HepG2 (cell line): ENCODE measurements at regions of chr3 and their contacts with region 1.

Region 1: DNA sequence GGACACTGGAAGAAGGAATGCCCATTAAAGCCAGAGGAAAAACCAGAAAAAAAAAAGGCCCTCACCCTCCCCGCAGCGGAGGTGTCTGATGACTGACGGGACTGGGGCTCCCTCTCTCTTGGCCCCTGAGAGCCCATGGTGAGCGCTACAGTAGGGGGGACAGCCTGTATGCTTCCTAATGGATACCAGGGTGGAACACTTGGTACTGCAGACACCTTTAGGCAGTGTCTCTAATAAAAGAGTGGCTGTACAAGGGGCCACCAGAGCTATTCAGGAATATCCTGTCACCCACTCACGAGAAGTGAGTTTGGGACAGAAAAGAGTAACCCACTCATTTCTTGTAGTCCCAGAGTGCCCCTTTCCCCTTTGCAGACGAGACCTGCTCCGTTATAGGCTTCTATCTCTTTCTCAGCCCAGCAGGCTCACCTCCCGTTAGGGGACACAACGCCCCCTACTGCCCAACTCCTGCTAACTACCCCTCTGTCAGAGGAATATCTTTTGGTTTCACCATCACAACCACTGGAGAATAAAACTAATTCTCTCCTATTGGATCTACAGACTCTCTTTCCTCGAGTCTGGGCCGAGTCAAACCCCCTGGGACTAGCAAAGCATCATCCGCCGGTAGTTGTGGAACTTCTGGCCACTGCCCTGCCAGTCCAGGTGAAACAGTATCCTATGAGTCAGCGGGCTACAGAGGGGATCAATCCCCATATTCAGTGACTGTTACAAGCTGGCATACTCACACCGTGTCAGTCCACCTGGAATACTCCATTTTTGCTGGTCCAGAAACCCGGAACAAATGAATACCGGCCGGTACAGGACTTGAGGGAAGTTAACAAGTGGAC is 40.8 kb downstream of the ZBTB11 start:
- DNase-seq: peak; percentile 44
- ATAC-seq: peak; percentile 88
- H3K4me3 ChIP-seq: peak overlapping the region; percentile 27 to 49 (median 40)
- H3K27ac ChIP-seq: no peak overlapping the region
- H3K4me1 ChIP-seq: peaks cover 37% of the 10 kb centered on the region
- H3K27me3 ChIP-seq: peaks cover 0 to 27% of the 10 kb centered on the region in 2 experiments; a peak in 3 of 5 replicates
- CTCF ChIP-seq: peak; percentile 87
- EP300 ChIP-seq: no peak
- POLR2A ChIP-seq: no peak
- RAD21 ChIP-seq: peak; percentile 73; the same call in 1 of the 2 replicates

Region 2: GRCh38 chr3:101069901-101070798 is 566.0 kb before region 1 on chr3:
- CTCF ChIA-PET with region 1: interaction called, 3 read pairs
- POLR2A ChIA-PET with region 1: no interaction called
- in situ Hi-C with region 1: loop called (anchors 25 kb)
- intact Hi-C with region 1: loop called (anchors 1 kb)
- DNase-seq: peak; percentile 31
- ATAC-seq: peak; percentile 99
- H3K4me3 ChIP-seq: no peak overlapping the region
- H3K27ac ChIP-seq: no peak overlapping the region
- H3K4me1 ChIP-seq: no peaks in the 10 kb centered on the region
- H3K27me3 ChIP-seq: no peaks in the 10 kb centered on the region; a peak in 1 of 5 replicates
- CTCF ChIP-seq: peak; percentile 79
- EP300 ChIP-seq: no peak
- POLR2A ChIP-seq: no peak
- RAD21 ChIP-seq: peak; percentile 46; the same call in 1 of the 2 replicates

Region 3: DNA sequence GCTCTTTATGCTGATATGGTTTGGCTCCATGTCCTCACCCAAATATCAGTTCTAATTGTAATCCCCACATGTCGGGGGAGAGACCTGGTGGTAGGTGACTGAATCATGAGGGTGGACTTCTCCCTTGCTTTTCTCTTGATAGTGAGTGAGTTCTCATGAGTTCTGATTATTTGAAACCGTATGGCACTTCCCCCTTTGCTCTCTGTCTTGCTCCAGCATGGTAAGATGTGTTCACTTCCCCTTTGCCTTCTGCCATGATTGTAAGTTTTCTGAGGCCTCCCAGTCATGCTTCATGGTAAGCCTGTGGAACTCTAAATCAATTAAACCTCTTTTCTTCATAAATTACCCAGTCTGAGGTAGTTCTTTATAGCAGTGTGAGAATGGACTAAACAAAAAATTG is 423.4 kb before region 1 on chr3:
- CTCF ChIA-PET with region 1: no interaction called
- POLR2A ChIA-PET with region 1: no interaction called
- in situ Hi-C with region 1: no loop called
- intact Hi-C with region 1: loop called (anchors 5 kb)
- DNase-seq: no peak
- ATAC-seq: no peak
- H3K4me3 ChIP-seq: no peak overlapping the region
- H3K27ac ChIP-seq: no peak overlapping the region
- H3K4me1 ChIP-seq: no peaks in the 10 kb centered on the region
- H3K27me3 ChIP-seq: no peaks in the 10 kb centered on the region; a peak in 1 of 5 replicates
- CTCF ChIP-seq: no peak
- EP300 ChIP-seq: no peak
- POLR2A ChIP-seq: no peak
- RAD21 ChIP-seq: no peak

Region 4: GRCh38 chr3:101229681-101230080 is 406.5 kb before region 1 on chr3:
- CTCF ChIA-PET with region 1: no interaction called
- POLR2A ChIA-PET with region 1: no interaction called
- in situ Hi-C with region 1: loop called (anchors 25 kb)
- intact Hi-C with region 1: loop called (anchors 10 kb)
- DNase-seq: peak; percentile 8
- ATAC-seq: peak; percentile 41; the same call in 1 of the 3 replicates
- H3K4me3 ChIP-seq: no peak overlapping the region
- H3K27ac ChIP-seq: no peak overlapping the region
- H3K4me1 ChIP-seq: no peaks in the 10 kb centered on the region
- H3K27me3 ChIP-seq: no peaks in the 10 kb centered on the region
- CTCF ChIP-seq: peak; percentile 48
- EP300 ChIP-seq: no peak
- POLR2A ChIP-seq: no peak
- RAD21 ChIP-seq: no peak

Region 5: DNA sequence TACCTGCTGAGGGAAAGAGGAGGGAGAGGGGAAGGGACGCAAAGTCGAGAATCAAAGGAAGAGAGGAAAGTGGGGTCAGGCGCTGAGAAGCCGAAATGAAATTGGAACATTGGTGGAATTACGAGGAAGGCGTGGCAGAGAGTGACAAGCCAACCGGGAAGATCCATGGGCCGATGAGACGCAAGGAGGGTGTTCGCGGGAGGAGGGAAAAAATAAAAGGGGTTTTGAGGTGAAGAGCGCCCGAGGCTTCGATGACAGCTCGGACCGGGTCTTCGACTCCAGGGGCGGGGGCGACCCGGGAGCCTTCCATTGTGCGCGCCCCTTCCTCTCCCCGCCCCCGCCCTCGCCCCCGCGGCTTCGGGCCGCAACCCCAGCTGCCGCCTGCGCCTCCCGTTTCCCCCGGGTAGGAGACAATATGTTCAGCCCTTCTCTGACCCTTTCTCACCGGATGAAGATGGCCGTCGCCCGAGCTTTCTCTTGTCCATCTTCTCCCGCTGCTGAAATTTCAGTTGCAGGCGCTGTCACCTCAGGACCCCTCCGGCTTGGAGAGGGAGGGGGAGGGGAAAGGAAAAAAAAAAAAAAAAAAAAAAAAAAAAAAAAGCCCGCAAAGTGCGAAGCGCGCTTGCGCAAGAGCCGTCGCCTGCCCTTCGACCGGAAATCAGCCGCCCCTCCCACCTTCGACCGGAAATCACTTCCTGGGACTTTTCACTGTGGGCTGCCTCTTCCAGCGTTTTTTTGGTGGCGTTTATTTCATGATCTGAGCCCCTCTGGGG is 123.3 kb before region 1 on chr3 and contains the start of gene SENP7:
- CTCF ChIA-PET with region 1: no interaction called
- POLR2A ChIA-PET with region 1: no interaction called
- in situ Hi-C with region 1: no loop called
- intact Hi-C with region 1: loop called (anchors 10 kb)
- DNase-seq: peak; percentile 71
- ATAC-seq: peak; percentile 85
- H3K4me3 ChIP-seq: peak within 1 kb of the TSS; percentile 80 to 92 (median 83)
- H3K27ac ChIP-seq: peak within 1 kb of the TSS; percentile 93
- H3K4me1 ChIP-seq: peaks cover 13% of the 10 kb centered on the region
- H3K27me3 ChIP-seq: no peaks in the 10 kb centered on the region; a peak in 1 of 5 replicates
- CTCF ChIP-seq: no peak
- EP300 ChIP-seq: no peak
- POLR2A ChIP-seq: peak; percentile 48 to 66
- RAD21 ChIP-seq: no peak
- total RNA-seq, gene SENP7: 10.0 and 10.3 TPM in 2 replicates

Region 6: DNA sequence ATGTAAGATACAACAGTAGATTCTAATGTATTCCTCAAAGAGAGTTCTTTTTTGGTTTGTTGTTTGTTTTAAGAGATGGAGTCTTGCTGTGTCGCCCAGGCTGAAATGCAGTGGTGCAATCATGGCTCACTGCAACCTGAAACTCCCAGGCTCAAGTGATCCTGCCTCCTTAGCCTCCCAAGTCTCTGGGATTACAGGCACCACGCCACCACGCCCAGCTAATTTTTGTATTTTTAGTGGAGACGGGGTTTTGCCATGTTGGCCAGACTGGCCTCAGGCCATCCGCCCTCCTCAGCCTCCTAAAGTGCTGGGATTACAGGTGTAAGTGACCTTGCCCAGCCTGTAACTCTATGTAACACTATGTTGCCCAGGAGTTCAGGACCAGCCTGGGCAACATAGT is 22.3 kb before region 1 on chr3:
- CTCF ChIA-PET with region 1: no interaction called
- POLR2A ChIA-PET with region 1: no interaction called
- in situ Hi-C with region 1: no loop called
- intact Hi-C with region 1: loop called (anchors 2 kb)
- DNase-seq: no peak
- ATAC-seq: no peak
- H3K4me3 ChIP-seq: no peak overlapping the region
- H3K27ac ChIP-seq: no peak overlapping the region
- H3K4me1 ChIP-seq: peaks cover 17% of the 10 kb centered on the region
- H3K27me3 ChIP-seq: no peaks in the 10 kb centered on the region
- CTCF ChIP-seq: no peak
- EP300 ChIP-seq: no peak
- POLR2A ChIP-seq: no peak
- RAD21 ChIP-seq: no peak